Activated CD4-positive, alpha-beta T cell treated with anti-CD3 and anti-CD28 coated beads for 36 hours (primary cell): ENCODE measurements at regions of chr10 and their contacts with region 1.

Region 1: GRCh38 chr10:50417886-50418830 is 166.8 kb upstream of the ASAH2 start:
- DNase-seq: peak; percentile 66
- ATAC-seq: peak; percentile 91
- H3K4me3 Mint-ChIP-seq: peak overlapping the region; percentile 76
- H3K27ac Mint-ChIP-seq: peak overlapping the region; percentile 64
- H3K4me1 Mint-ChIP-seq: peaks cover 41% of the 10 kb centered on the region
- H3K27me3 Mint-ChIP-seq: no peaks in the 10 kb centered on the region

Region 2: DNA sequence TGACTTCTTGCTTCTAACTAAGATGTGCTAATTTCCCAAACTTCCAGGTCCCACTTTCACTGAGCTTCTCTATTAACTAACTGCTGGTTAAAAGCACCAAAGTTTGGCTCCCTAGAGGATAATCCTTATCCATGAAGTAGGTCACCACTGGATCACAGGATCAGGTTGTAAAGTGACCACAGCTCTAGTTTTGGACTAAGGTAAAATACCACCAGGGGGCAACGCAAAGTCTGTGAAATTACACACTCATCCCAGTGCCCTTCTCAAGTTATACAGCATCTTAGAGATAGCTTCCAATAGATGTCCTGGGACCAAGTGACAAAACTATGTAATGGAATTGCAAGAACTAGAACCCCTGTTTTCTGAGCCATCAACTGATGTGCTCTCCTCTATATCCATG is 50.4 kb before region 1 on chr10:
- CTCF ChIA-PET with region 1: interaction called, 8 read pairs
- POLR2A ChIA-PET with region 1: no interaction called
- intact Hi-C with region 1: loop called in 1 of 2 experiments (anchors 5 kb)
- DNase-seq: peak; percentile 17
- ATAC-seq: no peak
- H3K4me3 Mint-ChIP-seq: no peak overlapping the region
- H3K27ac Mint-ChIP-seq: no peak overlapping the region
- H3K4me1 Mint-ChIP-seq: peaks cover 5% of the 10 kb centered on the region
- H3K27me3 Mint-ChIP-seq: no peaks in the 10 kb centered on the region

Region 3: DNA sequence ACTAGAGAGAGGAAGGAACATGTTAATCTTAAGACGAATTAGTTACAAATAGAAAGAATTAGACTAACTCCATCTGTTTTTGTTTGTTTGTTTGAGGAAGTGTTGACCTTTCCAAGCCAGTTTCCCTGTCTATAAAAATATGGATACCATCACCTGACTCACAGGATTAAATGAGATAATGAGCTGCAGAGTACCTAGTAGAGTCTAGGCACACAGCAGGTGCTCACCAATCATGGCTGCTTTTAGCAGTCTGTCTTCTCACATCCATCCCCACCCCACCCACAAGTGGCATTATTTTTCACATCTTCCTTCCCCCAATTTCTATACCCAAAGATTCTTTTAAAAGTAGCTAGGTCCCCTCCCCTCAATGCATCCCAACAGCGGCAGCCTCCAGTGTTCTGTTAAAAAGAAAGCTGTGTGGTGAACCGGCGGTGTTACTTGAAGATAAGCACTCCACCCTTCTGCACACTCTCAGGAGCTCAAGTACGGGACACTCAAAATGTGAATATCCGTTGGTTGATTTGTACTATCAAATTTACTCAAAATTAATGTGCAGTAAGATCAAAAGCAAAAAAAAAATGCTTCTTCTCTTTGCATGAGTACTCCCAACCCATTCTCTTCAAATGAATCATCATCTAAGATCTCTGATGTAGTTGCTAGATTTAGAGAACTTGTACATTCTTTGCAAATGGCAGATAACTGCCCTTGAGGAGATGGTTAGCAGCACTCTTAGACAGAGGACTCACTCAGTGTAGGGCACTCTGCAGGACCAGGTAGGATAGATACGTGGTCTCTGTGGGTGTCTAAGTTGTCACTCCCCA is 21.5 kb before region 1 on chr10:
- CTCF ChIA-PET with region 1: interaction called, 7 read pairs
- POLR2A ChIA-PET with region 1: no interaction called
- intact Hi-C with region 1: loop called in 1 of 2 experiments (anchors 1 kb)
- DNase-seq: peak; percentile 43
- ATAC-seq: peak; percentile 91
- H3K4me3 Mint-ChIP-seq: peak overlapping the region; percentile 49
- H3K27ac Mint-ChIP-seq: peak overlapping the region; percentile 16
- H3K4me1 Mint-ChIP-seq: peaks cover 44% of the 10 kb centered on the region
- H3K27me3 Mint-ChIP-seq: no peaks in the 10 kb centered on the region

Region 4: GRCh38 chr10:50490241-50490640 is 72.1 kb after region 1 on chr10:
- CTCF ChIA-PET with region 1: no interaction called
- POLR2A ChIA-PET with region 1: no interaction called
- intact Hi-C with region 1: no loop called
- DNase-seq: no peak
- ATAC-seq: no peak
- H3K4me3 Mint-ChIP-seq: no peak overlapping the region
- H3K27ac Mint-ChIP-seq: no peak overlapping the region
- H3K4me1 Mint-ChIP-seq: peaks cover 6% of the 10 kb centered on the region
- H3K27me3 Mint-ChIP-seq: no peaks in the 10 kb centered on the region